ENCODE measurements at regions of chr1 and their contacts with region 1.

Region 1: DNA sequence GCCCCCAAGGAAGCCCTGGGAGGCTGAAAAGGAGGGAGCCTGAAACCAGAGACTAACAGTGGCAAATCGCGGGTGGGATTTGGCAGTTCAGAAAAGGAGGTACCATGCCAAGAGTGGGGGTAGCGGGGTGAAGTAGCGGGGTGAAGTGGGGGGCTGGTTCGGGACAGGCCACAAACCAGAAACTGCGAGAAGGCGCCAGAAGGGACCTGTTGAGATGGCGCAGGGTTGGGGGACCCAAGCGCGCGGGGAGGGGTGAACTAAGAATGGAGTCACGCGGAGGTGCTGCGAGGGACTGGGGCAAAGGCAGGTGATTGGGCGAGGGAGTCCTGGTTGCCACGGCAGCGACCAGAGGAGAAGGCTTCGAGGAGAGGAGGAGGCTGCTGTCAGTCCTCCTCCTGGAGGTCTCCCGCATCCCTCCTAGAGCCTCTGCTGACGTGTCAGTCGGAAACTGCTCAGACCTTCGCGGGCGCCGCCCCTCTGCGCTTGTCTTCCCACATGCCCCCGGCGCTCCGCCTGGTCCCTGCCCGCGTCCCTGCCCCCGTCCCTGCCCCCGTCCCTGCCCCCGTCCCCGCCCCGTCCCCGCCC is 438 bp upstream of the MIA3 start:
- DNase-seq: peak; percentile 94
- ATAC-seq: peak; percentile 95
- H3K4me3 Mint-ChIP-seq: peak overlapping the region; percentile 83
- H3K27ac Mint-ChIP-seq: peak overlapping the region; percentile 88
- H3K4me1 Mint-ChIP-seq: peaks cover 31% of the 10 kb centered on the region
- H3K27me3 Mint-ChIP-seq: peaks cover 11% of the 10 kb centered on the region

Region 2: GRCh38 chr1:222589462-222590302 is 27.8 kb before region 1 on chr1 and contains the start of gene TAF1A:
- CTCF ChIA-PET with region 1: interaction called, 5 read pairs
- POLR2A ChIA-PET with region 1: no interaction called
- intact Hi-C with region 1: loop called in 1 of 2 experiments (anchors 1 kb)
- DNase-seq: peak; percentile 93
- ATAC-seq: peak; percentile 99
- H3K4me3 Mint-ChIP-seq: peak within 1 kb of the TSS; percentile 99
- H3K27ac Mint-ChIP-seq: peak within 1 kb of the TSS; percentile 99
- H3K4me1 Mint-ChIP-seq: peaks cover 36% of the 10 kb centered on the region
- H3K27me3 Mint-ChIP-seq: no peaks in the 10 kb centered on the region
- total RNA-seq, gene TAF1A: 18.5 to 21.1 TPM

Measured in activated CD4-positive, alpha-beta T cell treated with anti-CD3 and anti-CD28 coated beads for 36 hours (primary cell).